Prostate gland (tissue), 2 donors: ENCODE measurements at regions of chr2 and their contacts with region 1.

Region 1: DNA sequence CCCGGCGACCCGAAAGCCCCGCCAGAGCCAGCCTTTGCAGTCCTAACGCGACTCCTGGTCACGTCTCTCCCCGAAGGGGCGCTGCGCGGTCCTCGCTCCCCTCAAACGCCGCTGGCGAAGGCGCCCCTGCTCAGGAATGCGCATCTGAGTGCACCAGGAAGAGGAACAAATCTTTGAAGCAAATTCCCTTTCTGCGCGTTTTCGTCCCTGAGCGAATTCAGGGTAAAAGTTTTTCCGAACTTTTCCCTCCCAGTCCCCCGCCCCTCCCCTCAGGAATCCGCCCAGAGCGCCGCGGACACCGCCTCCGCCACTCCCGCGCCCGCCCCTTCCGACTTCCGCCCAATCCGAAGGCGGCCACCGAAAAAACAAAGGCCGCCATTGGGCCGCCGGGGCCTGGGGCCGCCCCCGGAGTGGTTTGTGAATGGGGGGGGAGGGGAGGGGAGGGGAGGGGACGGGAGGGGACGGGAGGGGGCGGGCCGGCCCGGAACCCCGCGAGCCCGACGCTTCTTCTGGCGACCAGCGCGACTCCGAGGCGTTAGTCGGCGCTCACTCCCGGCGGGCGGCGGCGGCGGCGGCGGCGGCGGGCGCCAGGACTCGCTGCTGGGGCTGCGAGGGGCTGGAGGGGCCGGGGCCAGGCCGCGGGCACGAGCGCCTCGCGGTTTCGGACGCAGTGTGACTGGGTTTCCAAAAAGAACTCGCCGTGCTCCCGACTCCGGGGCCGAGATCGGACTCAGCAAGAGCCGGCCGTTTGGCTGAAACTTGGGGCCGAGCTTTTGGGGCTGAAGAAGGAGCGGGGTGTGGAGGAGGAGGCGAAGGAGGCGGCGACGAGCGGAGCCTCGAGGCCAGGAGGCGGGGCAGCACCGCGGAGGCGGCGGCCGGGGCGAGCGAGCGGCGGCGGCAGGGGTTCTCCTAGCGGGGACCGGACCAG is at the start of gene FZD7:
- DNase-seq: peak; percentile 94
- H3K4me3 ChIP-seq: peak within 1 kb of the TSS; percentile 63 to 77
- H3K27ac ChIP-seq: peak within 1 kb of the TSS; percentile 95 to 96
- H3K4me1 ChIP-seq: no peaks in the 10 kb centered on the region
- H3K27me3 ChIP-seq: no peaks in the 10 kb centered on the region
- CTCF ChIP-seq: no peak
- POLR2A ChIP-seq: peak; percentile 54
- total RNA-seq, gene FZD7: 16.1 to 26.1 TPM

Region 2: GRCh38 chr2:201780674-201781581 is 252.7 kb before region 1 on chr2 and contains the start of gene ALS2:
- intact Hi-C with region 1: loop called (anchors 5 kb)
- DNase-seq: peak; percentile 98
- H3K4me3 ChIP-seq: peak within 1 kb of the TSS; percentile 71 to 86
- H3K27ac ChIP-seq: peak within 1 kb of the TSS; percentile 81 to 84
- H3K4me1 ChIP-seq: no peaks in the 10 kb centered on the region
- H3K27me3 ChIP-seq: no peaks in the 10 kb centered on the region
- CTCF ChIP-seq: peak in 1 of 4 experiments; percentile 9
- POLR2A ChIP-seq: peak; percentile 69
- total RNA-seq, gene ALS2: 14.8 to 16.3 TPM

Region 3: GRCh38 chr2:201795607-201796477 is 237.7 kb before region 1 on chr2:
- intact Hi-C with region 1: loop called (anchors 2 kb)
- DNase-seq: no peak
- H3K4me3 ChIP-seq: no peak overlapping the region
- H3K27ac ChIP-seq: no peak overlapping the region
- H3K4me1 ChIP-seq: no peaks in the 10 kb centered on the region
- H3K27me3 ChIP-seq: no peaks in the 10 kb centered on the region
- CTCF ChIP-seq: peak in 2 of 4 experiments; percentile 46 to 68
- POLR2A ChIP-seq: no peak

Region 4: DNA sequence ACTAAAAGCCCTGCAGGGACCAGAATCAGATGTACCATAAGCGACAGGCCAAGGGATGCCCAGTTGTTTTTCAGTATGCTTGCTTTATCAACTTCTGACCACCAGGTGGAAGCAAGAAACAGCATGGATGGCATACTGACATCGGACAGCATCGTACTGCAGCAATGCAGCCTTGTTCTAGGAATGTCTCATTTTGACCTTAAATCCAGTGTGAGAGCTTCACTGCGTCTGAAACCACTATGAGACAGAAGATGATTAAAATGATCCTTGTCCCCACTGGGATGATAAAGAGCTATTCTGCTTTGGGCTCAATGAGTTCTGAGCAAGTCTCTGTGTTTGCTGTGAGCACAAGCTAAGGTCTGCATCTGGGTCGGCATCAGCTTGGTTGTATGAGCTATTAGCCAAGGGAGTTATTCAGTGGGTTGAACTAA is 172.9 kb before region 1 on chr2:
- intact Hi-C with region 1: loop called (anchors 2 kb)
- DNase-seq: peak; percentile 59
- H3K4me3 ChIP-seq: no peak overlapping the region
- H3K27ac ChIP-seq: no peak overlapping the region
- H3K4me1 ChIP-seq: no peaks in the 10 kb centered on the region
- H3K27me3 ChIP-seq: peaks cover 3% of the 10 kb centered on the region
- CTCF ChIP-seq: peak; percentile 64 to 89 (median 84)
- POLR2A ChIP-seq: no peak

Region 5: DNA sequence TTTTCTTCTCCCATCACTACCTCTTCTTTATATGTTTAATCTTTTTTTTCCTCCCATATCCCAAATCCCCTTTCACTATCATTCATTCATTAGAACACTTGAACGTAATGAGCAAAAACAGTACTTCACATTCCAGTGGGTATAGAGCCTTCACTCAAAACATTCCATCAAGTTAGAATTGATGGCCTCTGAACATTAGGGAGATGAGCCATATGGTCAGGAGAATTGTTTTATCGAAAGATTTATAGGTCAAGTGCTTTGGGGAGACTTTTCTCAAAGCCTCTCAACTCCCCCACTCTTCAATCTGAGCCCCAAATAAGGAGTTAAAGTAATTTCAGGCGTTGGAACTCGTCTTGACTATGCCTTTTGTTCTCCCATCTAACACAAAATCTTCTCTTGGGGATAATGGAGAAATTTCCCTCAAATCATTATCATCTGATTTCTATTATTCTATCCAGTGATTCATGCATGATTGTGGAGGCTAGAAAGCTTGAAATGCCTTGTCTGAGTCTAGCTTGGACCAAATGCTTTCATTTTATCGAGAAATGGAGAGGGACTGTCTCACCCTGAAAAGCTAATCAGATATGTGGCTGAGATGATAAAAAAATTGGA is 118.6 kb after region 1 on chr2:
- intact Hi-C with region 1: loop called (anchors 5 kb)
- DNase-seq: no peak
- H3K4me3 ChIP-seq: no peak overlapping the region
- H3K27ac ChIP-seq: no peak overlapping the region
- H3K4me1 ChIP-seq: no peaks in the 10 kb centered on the region
- H3K27me3 ChIP-seq: no peaks in the 10 kb centered on the region
- CTCF ChIP-seq: no peak
- POLR2A ChIP-seq: no peak

Region 6: DNA sequence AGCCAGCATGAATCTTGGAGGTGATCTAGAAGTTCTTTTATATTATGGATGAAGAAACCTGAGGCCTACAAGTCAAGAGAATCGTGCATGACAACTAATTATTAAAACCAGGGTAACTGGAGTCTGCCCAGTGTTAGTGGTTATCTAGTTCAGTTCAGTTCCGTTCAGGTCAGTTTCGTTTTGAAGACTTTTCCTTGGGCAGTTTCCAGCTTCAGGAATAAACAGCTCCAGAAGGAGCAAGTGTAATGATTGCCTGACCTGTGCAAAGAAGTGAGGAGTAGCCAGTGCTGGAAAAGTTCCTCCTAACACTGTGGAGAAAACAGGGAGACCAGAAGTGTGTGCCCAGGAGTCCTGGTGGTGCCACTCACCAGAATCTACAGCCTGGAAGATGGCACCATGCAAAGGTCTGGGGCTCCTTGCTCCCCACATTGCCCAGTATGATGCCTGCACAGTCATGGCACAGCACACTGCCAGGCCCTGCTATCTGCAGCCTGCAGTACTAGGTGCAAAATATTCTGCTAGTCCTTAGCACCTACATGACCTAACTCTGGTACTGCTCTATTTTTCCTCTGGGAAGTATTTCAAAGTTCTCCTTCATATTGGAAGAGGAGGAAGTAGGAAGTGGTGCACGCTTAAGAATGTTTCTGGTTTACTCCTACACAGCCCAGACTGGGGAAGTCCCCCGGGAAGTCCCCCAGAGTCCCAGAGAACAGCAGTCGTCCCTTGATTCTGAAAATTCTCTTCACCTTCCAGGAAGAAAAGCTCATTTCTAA is 139.0 kb after region 1 on chr2:
- intact Hi-C with region 1: loop called (anchors 5 kb)
- DNase-seq: no peak
- H3K4me3 ChIP-seq: no peak overlapping the region
- H3K27ac ChIP-seq: no peak overlapping the region
- H3K4me1 ChIP-seq: no peaks in the 10 kb centered on the region
- H3K27me3 ChIP-seq: no peaks in the 10 kb centered on the region
- CTCF ChIP-seq: no peak
- POLR2A ChIP-seq: no peak